ENCODE measurements at regions of chr14 and their contacts with region 1.

Region 1: DNA sequence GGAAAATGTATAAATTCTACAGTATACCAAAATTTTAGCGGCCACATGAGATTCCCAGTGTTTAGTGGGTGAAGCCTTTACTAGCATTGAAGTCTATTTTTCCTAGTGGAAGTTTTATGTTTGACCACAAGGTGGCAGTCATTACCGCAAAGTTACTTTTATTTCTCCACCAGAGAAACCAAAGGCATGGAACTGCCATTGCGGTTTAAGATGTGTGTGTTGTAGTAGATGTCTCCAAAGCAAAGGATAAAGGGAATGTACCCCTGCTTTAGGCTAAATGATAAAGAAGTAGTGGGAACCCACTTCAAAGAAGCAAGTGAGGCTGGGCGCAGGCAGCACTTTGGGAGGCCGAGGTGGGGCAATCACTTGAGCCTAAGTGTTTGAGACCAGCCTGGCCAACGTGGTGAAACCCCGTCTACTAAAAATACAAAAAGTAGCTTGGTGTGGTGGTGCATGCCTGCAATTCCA is 140.5 kb downstream of the PRKCH start:
- DNase-seq: peak in 2 of 4 donors; percentile 70 to 81
- ATAC-seq: peak; percentile 87
- H3K4me3 ChIP-seq: no peak overlapping the region
- H3K27ac ChIP-seq: peak overlapping the region in 1 of 2 donors; percentile 13
- H3K4me1 ChIP-seq: peaks cover 0 to 35% of the 10 kb centered on the region in 2 donors
- H3K27me3 ChIP-seq: no peaks in the 10 kb centered on the region
- CTCF ChIP-seq: peak; percentile 81 to 89

Region 2: GRCh38 chr14:61730756-61731373 is 269.0 kb after region 1 on chr14:
- intact Hi-C with region 1: loop called in 1 of 2 experiments (anchors 5 kb)
- DNase-seq: peak in 1 of 4 donors; percentile 28
- ATAC-seq: no peak
- H3K4me3 ChIP-seq: no peak overlapping the region
- H3K27ac ChIP-seq: no peak overlapping the region
- H3K4me1 ChIP-seq: peaks cover 0 to 25% of the 10 kb centered on the region in 2 donors
- H3K27me3 ChIP-seq: no peaks in the 10 kb centered on the region
- CTCF ChIP-seq: peak in 1 of 2 donors; percentile 16

Region 3: DNA sequence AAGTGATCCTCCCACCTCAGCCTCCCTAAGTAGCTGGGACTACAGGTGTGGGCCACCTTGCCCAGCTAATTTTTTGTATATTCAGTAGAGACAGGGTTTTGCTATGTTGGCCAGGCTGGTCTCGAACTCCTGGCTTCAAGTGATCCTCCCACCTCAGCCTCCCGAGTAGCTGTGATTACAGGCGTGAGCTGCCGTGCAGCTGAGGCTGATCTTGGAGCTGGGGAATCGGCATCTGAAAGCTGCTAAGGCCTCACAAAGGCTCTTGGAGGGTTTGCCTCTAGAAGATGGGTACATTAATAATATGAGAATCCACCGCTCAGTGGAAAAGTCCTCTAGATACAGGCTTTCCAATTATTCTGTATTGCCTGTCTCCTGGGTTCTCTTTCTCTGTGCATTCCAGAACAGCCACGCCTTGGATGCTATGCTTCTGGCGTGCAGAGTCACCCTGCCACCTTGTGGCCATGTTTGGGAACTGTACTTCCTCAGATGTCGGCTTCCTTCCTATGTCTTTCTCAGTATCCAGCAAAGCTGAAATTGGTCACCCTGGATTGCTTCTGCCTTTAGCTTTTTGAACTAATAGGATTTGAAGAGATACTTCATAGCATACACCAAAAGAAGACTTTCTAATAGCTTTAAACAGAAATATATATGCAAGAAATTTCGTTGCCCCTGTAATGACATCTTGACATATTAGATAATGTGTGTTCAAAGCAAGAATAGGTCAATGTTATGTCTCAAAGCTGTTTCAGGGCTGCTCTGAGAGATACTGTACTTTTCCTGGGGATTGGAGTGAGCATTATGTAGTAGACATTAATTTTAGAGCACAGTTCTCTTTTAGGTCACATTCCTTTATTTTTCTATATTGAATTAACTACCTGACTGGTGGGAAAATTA is 375.7 kb after region 1 on chr14:
- intact Hi-C with region 1: loop called (anchors 5 to 10 kb)
- DNase-seq: peak; percentile 71 to 85 (median 79)
- ATAC-seq: peak; percentile 99
- H3K4me3 ChIP-seq: no peak overlapping the region
- H3K27ac ChIP-seq: no peak overlapping the region
- H3K4me1 ChIP-seq: no peaks in the 10 kb centered on the region
- H3K27me3 ChIP-seq: no peaks in the 10 kb centered on the region
- CTCF ChIP-seq: peak; percentile 95 to 98